ENCODE measurements at regions of chr3 and their contacts with region 1.

Region 1: DNA sequence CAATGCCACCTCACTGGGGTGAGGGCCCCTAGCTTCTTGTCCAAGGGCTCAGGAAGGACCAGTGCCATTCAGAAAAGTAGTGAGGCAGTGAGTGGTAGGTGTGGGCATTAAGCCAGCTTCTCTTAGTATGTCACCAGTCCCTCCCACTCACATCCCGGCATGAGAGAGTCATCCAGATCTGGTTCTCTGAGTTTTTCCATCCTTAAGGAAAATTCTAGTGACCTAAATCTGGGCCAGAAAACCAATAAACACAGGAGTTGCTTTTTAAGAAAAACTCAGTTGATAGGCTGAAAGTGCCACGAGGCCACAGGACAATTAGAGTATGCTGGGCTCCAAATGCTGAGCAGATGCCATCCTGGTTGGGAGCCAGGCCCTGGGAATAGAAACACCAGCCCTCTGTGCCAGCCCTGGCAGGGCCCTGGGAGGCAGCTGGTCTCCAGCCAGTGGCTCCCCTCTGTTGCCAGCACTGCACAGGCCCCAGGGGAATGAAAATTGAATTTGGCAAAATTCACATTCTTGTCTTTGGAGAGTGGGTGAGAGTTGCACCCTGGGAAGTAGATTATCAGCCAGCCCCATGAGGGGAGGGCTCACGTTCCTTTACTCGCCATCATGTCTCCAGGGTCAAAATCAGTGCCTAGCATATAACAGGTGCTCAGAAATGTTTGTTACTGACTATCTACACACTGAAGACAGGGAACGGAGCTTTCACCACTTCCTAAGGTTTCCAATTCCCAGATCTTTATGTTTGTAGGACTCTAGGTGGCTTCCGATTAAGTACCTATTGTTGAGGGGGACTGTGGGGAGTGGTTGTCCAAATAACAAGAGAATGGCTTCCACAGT is 52.8 kb downstream of the FAM43A start:
- DNase-seq: peak; percentile 53
- H3K4me3 ChIP-seq: no peak overlapping the region
- H3K27ac ChIP-seq: no peak overlapping the region
- H3K4me1 ChIP-seq: peaks cover 16% of the 10 kb centered on the region
- H3K27me3 ChIP-seq: peaks cover 8% of the 10 kb centered on the region
- CTCF ChIP-seq: no peak

Region 2: DNA sequence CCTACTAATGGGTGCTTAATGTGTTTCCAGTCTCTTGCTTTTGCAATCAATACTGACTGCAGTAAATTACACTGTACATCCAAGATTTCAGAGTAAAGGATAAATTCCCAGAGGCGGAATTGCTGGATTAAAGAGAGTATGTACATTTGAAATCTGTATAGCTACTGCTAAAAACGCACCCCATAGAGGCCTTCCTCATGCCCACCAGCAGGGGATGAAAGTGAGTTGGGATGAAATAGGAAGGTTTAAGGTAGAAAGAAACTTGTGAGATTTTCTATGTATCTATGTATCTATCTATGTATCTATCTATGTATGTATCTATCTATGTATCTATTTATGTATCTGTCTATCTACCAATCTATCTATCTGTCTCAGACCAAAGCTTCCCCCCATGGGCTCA is 133.6 kb before region 1 on chr3:
- CTCF ChIA-PET with region 1: no interaction called
- dilution Hi-C with region 1: no loop called
- in situ Hi-C with region 1: no loop called
- intact Hi-C with region 1: no loop called
- DNase-seq: no peak
- H3K4me3 ChIP-seq: no peak overlapping the region
- H3K27ac ChIP-seq: no peak overlapping the region
- H3K4me1 ChIP-seq: no peaks in the 10 kb centered on the region
- H3K27me3 ChIP-seq: no peaks in the 10 kb centered on the region
- CTCF ChIP-seq: peak; percentile 25 to 29

Region 3: DNA sequence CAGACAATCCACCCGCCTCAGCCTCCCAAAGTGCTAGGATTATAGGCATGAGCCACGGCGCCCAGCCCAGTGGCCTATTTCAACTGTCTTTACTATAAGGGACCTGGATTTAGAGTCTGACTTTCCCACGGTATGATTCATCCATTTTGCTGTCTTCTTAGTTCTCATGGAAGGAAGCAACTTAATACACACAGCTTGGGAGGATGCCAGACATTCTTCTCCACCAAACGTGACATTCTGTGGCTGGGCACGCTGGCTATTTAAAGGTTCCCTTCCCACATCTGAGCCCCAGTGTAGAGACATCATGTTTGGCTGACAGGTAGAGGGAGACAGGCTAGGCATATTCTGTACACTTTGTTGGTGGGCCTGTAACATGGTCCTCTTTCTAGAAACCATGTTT is 26.6 kb before region 1 on chr3:
- CTCF ChIA-PET with region 1: no interaction called
- dilution Hi-C with region 1: no loop called
- in situ Hi-C with region 1: no loop called
- intact Hi-C with region 1: loop called (anchors 1 kb)
- DNase-seq: peak; percentile 88
- H3K4me3 ChIP-seq: no peak overlapping the region
- H3K27ac ChIP-seq: no peak overlapping the region
- H3K4me1 ChIP-seq: peaks cover 2% of the 10 kb centered on the region
- H3K27me3 ChIP-seq: no peaks in the 10 kb centered on the region
- CTCF ChIP-seq: no peak

Measured in mammary epithelial cell (primary cell).